Sigmoid colon (tissue), 7 donors: ENCODE measurements at regions of chr5 and their contacts with region 1.

Region 1: DNA sequence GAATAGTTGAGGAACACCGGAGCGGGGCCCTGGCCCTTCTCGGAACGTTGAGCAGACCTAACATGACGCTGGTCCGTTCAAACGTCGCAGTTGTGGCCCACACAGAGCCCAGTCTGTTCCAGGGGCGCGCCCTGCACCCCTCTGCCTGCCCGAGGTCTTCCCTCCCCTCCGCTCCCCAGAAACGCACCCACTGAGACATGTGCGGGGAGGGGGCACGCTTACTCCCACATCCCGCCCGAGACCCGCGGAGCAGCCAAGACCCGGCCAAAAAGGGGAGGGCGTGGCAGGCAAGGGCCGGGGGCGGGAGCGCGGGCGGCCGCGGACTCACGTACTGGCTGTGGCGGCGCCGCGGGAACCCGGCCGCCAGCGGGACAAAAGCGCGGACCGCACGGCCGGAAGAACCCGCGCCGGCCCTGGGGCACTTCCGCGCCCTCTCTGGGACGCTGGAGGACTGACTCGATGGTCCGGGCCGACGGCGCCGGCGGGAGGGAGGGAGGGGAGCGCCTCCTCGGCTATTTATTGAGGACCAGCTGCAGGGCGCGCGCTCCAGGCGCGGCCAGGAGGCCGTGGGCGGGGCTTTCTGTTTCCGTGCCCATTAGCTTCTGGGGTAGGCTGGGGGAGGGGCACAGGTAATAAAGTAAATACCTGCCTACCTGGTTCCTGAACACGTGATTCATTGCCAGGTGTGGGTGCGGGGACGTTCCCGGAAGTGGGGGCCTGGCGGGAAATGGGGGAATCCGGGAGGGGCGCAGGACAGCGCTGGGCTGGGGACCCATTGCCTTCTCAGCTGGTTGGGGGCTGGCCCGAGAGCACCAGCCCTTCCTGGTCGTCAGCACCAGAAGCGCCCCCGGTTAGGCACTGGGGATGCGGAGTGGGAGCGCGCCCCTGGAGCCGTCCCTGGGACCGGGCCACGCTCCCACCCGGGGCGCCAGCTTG is at the start of gene ZFP62:
- DNase-seq: peak; percentile 94
- H3K4me3 ChIP-seq: peak within 1 kb of the TSS; percentile 89 to 96 (median 92)
- H3K27ac ChIP-seq: peak within 1 kb of the TSS; percentile 90 to 94 (median 92)
- H3K4me1 ChIP-seq: peaks cover 0 to 12% (median 8%) of the 10 kb centered on the region in 4 donors
- H3K27me3 ChIP-seq: no peaks in the 10 kb centered on the region
- CTCF ChIP-seq: peak in 1 of 4 experiments; percentile 11
- EP300 ChIP-seq: no peak
- POLR2A ChIP-seq: peak in 1 of 2 donors; percentile 22
- total RNA-seq, gene ZFP62: 18.7 to 34.6 (median 27.3) TPM

Region 2: GRCh38 chr5:180755601-180756000 is 105.6 kb before region 1 on chr5:
- intact Hi-C with region 1: no loop called
- DNase-seq: no peak
- H3K4me3 ChIP-seq: no peak overlapping the region
- H3K27ac ChIP-seq: no peak overlapping the region
- H3K4me1 ChIP-seq: no peaks in the 10 kb centered on the region
- H3K27me3 ChIP-seq: no peaks in the 10 kb centered on the region
- CTCF ChIP-seq: no peak
- EP300 ChIP-seq: no peak
- POLR2A ChIP-seq: no peak

Region 3: GRCh38 chr5:180784497-180785097 is 76.6 kb before region 1 on chr5:
- intact Hi-C with region 1: loop called (anchors 5 kb)
- DNase-seq: peak; percentile 89
- H3K4me3 ChIP-seq: no peak overlapping the region
- H3K27ac ChIP-seq: peak overlapping the region; percentile 77 to 89 (median 82)
- H3K4me1 ChIP-seq: peaks cover 0 to 48% (median 35%) of the 10 kb centered on the region in 4 donors
- H3K27me3 ChIP-seq: no peaks in the 10 kb centered on the region
- CTCF ChIP-seq: peak; percentile 24 to 65 (median 59)
- EP300 ChIP-seq: no peak
- POLR2A ChIP-seq: no peak

Region 4: GRCh38 chr5:180802325-180803180 is 58.6 kb before region 1 on chr5 and contains the start of gene MGAT1:
- intact Hi-C with region 1: loop called (anchors 5 kb)
- DNase-seq: peak; percentile 96
- H3K4me3 ChIP-seq: peak within 1 kb of the TSS; percentile 66 to 95 (median 88)
- H3K27ac ChIP-seq: peak within 1 kb of the TSS; percentile 97 to 99 (median 98)
- H3K4me1 ChIP-seq: peaks cover 0 to 91% (median 83%) of the 10 kb centered on the region in 4 donors
- H3K27me3 ChIP-seq: no peaks in the 10 kb centered on the region
- CTCF ChIP-seq: no peak
- EP300 ChIP-seq: no peak
- POLR2A ChIP-seq: peak; percentile 39
- total RNA-seq, gene MGAT1: 94.5 to 149 (median 121) TPM

Region 5: GRCh38 chr5:180831139-180832048 is 29.8 kb before region 1 on chr5:
- intact Hi-C with region 1: loop called (anchors 1 kb)
- DNase-seq: peak; percentile 94
- H3K4me3 ChIP-seq: peak overlapping the region; percentile 83 to 93 (median 88)
- H3K27ac ChIP-seq: peak overlapping the region; percentile 96 to 100 (median 97)
- H3K4me1 ChIP-seq: peaks cover 0 to 34% (median 25%) of the 10 kb centered on the region in 4 donors
- H3K27me3 ChIP-seq: no peaks in the 10 kb centered on the region
- CTCF ChIP-seq: peak in 2 of 4 experiments; percentile 13 to 19
- EP300 ChIP-seq: peak in 2 of 4 donors; percentile 11 to 13
- POLR2A ChIP-seq: peak; percentile 81 to 84

Region 6: DNA sequence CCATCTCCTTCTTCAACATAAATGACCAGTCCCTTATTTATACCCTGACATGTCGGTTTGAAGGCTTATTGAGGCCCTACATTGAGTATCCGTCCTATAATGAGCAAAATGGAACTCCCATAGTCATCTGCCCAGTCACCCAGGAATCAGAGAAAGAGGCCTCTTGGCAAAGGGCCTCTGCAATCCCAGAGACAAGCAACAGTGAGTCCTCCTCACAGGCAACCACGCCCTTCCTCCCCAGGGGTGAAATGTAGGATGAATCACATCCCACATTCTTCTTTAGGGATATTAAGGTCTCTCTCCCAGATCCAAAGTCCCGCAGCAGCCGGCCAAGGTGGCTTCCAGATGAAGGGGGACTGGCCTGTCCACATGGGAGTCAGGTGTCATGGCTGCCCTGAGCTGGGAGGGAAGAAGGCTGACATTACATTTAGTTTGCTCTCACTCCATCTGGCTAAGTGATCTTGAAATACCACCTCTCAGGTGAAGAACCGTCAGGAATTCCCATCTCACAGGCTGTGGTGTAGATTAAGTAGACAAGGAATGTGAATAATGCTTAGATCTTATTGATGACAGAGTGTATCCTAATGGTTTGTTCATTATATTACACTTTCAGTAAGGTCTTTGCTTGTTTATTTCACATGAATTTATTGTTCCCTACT is 89.3 kb after region 1 on chr5:
- intact Hi-C with region 1: no loop called
- DNase-seq: no peak
- H3K4me3 ChIP-seq: no peak overlapping the region
- H3K27ac ChIP-seq: no peak overlapping the region
- H3K4me1 ChIP-seq: no peaks in the 10 kb centered on the region
- H3K27me3 ChIP-seq: no peaks in the 10 kb centered on the region
- CTCF ChIP-seq: no peak
- EP300 ChIP-seq: no peak
- POLR2A ChIP-seq: no peak

Region 7: DNA sequence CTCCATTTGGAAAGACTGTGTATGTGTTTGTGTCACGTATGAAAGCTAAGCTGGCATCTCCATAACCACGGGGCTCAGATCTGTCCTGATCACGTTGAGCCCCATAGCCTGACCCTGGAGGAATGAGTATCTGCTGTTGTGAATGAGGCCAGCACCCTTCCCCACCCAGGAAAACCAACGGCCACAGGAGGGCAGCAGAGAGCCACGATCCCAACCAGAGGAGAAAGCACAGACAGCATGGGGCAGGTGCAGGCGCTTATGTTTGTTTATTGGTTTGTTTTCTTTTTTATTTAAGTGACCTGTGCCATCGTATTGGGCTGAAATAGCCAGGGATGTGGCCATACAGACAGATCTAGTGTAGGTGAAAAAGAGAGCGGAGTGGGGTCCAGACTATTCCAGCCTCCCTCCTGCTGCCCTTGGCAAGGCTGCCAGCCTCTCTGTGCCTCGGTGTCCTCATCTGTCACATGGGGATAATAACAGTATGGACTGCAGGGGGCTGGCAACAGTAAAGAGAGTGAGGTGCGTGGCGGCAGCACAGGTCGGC is 298.2 kb after region 1 on chr5:
- intact Hi-C with region 1: loop called (anchors 5 kb)
- DNase-seq: peak; percentile 91
- H3K4me3 ChIP-seq: no peak overlapping the region
- H3K27ac ChIP-seq: peak overlapping the region in 2 of 4 donors; percentile 72 to 80
- H3K4me1 ChIP-seq: peaks cover 0 to 12% (median 5%) of the 10 kb centered on the region in 4 donors
- H3K27me3 ChIP-seq: peaks cover 0 to 27% (median 3%) of the 10 kb centered on the region in 3 donors
- CTCF ChIP-seq: peak; percentile 76 to 92 (median 79)
- EP300 ChIP-seq: no peak
- POLR2A ChIP-seq: no peak